Posterior vena cava (tissue), 2 donors: ENCODE measurements at regions of chr10 and their contacts with region 1.

Region 1: DNA sequence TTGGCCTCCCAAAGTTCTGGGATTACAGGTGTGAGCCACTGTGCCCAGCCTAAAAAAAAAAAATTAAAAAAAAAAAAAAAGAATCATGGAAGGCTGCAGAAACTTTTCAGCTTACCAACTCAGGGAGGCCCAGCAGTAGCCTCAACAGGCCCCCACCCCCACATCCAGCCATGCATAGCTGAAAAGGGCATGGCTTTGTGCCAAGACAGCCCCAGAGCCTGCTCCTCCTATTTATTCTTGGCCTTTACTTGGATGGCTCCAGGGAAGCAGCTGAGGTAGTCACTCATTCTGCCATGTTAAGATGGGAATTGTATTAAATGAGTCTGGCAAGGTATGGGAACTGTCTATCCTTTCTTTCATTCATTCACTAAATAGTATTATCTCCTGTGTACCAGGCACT is 13.7 kb upstream of the CNNM2 start:
- DNase-seq: no peak

Region 2: GRCh38 chr10:102729029-102730026 is 175.0 kb before region 1 on chr10:
- intact Hi-C with region 1: loop called (anchors 2 to 5 kb)
- DNase-seq: peak; percentile 97

Region 3: GRCh38 chr10:102831322-102832071 is 72.8 kb before region 1 on chr10:
- intact Hi-C with region 1: loop called (anchors 5 kb)
- DNase-seq: no peak